AG04449 (cell line): ENCODE measurements at regions of chr2 and their contacts with region 1.

Region 1: DNA sequence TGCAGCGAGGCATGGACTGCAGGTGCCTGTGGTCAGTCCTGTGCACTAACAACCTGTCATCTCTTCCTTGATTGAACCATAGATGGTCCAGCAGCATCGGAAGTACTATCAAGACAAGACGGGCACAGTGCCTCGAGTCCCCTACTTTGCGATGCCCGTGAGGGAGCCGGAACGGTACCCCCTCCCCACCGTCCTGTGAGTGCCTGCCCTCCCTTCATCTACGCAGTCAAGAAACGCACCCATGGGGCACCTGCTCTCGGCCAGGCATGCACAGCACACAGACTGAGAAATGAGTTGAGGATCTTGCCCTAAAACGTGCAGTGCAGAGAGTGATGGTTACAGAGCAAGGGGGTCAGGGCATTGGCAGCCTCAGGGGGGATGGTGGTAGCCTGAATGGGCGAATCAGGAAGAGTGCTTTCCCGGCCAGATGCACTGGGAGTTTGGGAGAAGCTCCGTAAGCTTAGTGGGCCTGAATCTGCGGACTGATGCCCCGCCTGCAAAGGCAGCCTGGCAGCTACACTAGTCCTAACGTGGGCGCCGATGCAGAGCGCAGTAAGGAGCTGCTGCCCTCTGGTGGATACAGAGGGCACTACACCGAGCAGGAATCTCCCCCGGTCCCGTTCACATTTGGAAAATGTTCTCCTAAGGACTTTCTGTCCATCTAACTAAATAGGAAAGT is 63.6 kb downstream of the CIB4 start:
- DNase-seq: no peak
- H3K4me3 ChIP-seq: no peak overlapping the region
- CTCF ChIP-seq: peak; percentile 94

Region 2: DNA sequence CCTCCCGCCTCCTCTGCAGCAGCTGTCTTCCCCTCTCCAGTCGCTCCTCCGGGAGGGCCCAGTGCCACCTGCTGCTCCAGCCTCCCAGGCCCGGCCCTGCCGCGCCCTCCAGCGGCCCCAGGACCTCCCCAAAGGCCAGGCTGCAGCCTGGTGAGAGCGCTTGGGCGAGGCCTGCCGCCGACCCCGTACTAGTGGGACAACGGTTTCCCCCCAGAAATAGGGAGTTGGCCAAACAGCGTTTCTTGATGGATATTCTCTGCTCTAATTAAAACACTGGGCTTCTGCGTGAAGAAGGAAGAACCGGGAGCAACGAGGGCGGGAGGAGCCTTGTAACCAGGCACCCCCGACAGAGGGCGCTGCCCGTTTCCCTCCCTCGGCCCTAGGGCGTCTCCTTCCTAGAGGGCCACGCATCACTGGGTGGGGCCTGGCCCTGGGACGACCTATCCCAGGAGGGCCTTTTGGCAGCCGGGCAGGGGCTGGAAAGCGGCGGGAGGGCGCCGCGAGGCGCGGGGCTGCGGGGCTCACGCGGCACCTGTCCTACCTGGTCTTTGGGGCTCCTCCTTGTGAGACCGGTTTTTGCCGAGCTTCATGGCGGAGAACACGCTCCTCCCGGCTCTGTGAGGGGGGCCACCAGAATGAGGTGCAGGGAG is 74.2 kb before region 1 on chr2:
- CTCF ChIA-PET with region 1: interaction called, 13 read pairs
- POLR2A ChIA-PET with region 1: no interaction called
- DNase-seq: no peak
- H3K4me3 ChIP-seq: no peak overlapping the region
- CTCF ChIP-seq: peak; percentile 67

Region 3: GRCh38 chr2:26542194-26542455 is 35.4 kb before region 1 on chr2:
- CTCF ChIA-PET with region 1: interaction called, 15 read pairs
- POLR2A ChIA-PET with region 1: no interaction called
- DNase-seq: no peak
- H3K4me3 ChIP-seq: no peak overlapping the region
- CTCF ChIP-seq: no peak

Region 4: DNA sequence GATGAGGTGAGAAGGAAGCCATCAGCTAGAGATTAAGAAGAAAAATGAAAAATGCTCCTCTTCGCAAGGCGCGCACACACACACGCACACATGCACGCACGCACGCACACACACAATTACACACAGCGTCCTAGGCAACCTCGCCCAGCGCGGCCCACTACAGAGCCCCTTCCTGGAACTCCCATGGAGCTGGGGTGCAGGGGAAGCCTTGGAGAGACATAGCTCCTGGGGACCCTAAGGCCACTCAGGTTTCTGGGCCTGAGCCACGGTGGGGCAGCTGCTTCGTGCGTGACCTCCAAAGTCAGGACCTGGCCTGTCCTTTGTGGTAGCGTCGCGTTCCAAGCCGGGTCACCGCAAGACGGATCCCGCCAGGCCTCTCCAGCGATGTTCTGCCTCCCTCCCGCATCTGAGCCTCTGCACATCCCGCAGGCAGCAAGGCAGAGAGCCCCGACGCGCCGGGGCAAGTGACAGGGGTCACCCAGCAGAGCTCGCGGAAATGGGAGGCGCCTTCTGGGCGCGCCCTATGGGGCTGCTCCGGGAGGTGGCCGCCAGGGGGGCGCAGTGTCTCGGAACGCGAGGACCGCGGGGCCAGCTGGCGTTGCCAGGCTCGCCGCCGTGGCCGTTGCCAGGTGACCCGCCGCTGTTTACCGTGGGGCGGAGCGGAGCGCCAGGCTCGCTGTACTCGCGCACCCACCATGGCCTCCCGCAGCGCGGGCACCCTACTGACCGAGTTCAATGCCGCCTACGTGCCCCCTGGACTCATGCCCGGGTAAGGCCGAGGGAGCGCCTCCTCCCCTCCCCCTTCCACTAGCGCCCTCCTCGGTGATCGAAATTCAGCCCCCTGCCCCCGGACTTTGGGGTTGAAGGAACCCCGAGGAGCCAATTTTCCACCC is 15.4 kb before region 1 on chr2:
- CTCF ChIA-PET with region 1: interaction called, 45 read pairs
- POLR2A ChIA-PET with region 1: no interaction called
- DNase-seq: no peak
- H3K4me3 ChIP-seq: 0 out of 2 replicates have a peak overlapping the region, but pooled peaks have one; percentile 6
- CTCF ChIP-seq: peak; percentile 26

Region 5: GRCh38 chr2:26605195-26605998 is 27.8 kb after region 1 on chr2:
- CTCF ChIA-PET with region 1: interaction called, 12 read pairs
- POLR2A ChIA-PET with region 1: no interaction called
- DNase-seq: no peak
- H3K4me3 ChIP-seq: no peak overlapping the region
- CTCF ChIP-seq: peak; percentile 69